BJ (cell line): ENCODE measurements at regions of chr10 and their contacts with region 1.

Region 1: GRCh38 chr10:75019370-75019769 is 92.1 kb upstream of the SAMD8 start:
- DNase-seq: no peak
- H3K4me3 ChIP-seq: no peak overlapping the region
- H3K27me3 ChIP-seq: no peaks in the 10 kb centered on the region
- CTCF ChIP-seq: peak; percentile 33

Region 2: DNA sequence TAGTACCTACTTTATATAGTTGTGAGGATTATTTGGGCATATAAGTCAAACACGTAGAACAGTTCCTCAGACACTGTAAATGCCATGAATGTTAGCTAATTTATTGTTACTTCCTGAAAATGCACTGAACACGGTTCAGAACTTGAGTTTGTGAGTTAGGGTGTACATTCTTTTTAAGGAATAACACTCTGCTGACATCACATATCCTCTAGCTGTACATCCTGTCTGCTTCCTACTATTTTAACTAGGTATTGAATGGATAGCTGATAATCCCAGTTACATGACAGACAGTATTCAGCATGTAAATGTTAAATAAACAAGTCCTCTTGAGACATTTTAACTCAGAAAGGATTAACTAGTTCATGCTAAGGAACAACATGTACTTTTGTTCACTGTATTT is 108.1 kb after region 1 on chr10:
- CTCF ChIA-PET with region 1: no interaction called
- POLR2A ChIA-PET with region 1: interaction called, 14 read pairs
- DNase-seq: no peak
- H3K4me3 ChIP-seq: no peak overlapping the region
- H3K27me3 ChIP-seq: no peaks in the 10 kb centered on the region
- CTCF ChIP-seq: no peak

Region 3: GRCh38 chr10:75427951-75428350 is 408.6 kb after region 1 on chr10:
- CTCF ChIA-PET with region 1: no interaction called
- POLR2A ChIA-PET with region 1: no interaction called
- DNase-seq: no peak
- H3K4me3 ChIP-seq: no peak overlapping the region
- H3K27me3 ChIP-seq: peaks cover 3% of the 10 kb centered on the region
- CTCF ChIP-seq: no peak